Naive thymus-derived CD4-positive, alpha-beta T cell (primary cell): ENCODE measurements at regions of chr2 and their contacts with region 1.

Region 1: GRCh38 chr2:50143822-50144575 is 887.9 kb downstream of the NRXN1 start:
- DNase-seq: peak in 5 of 9 donors; percentile 2 to 15 (median 10)
- ATAC-seq: peak; percentile 53
- H3K4me3 ChIP-seq: no peak overlapping the region
- H3K4me3 Mint-ChIP-seq: peak overlapping the region; percentile 24 to 86 (median 76)
- H3K27ac ChIP-seq: no peak overlapping the region
- H3K27ac Mint-ChIP-seq: peak overlapping the region in 3 of 9 donors; percentile 10 to 66 (median 33)
- H3K4me1 ChIP-seq: no peaks in the 10 kb centered on the region
- H3K4me1 Mint-ChIP-seq: peaks cover 0 to 11% (median 5%) of the 10 kb centered on the region in 7 donors
- H3K27me3 ChIP-seq: no peaks in the 10 kb centered on the region
- H3K27me3 Mint-ChIP-seq: no peaks in the 10 kb centered on the region

Region 2: GRCh38 chr2:49616800-49617199 is 527.2 kb before region 1 on chr2:
- CTCF ChIA-PET with region 1: no interaction called
- POLR2A ChIA-PET with region 1: no interaction called
- intact Hi-C with region 1: loop called in 1 of 2 experiments (anchors 5 kb)
- DNase-seq: no peak
- ATAC-seq: no peak
- H3K4me3 ChIP-seq: no peak overlapping the region
- H3K4me3 Mint-ChIP-seq: no peak overlapping the region
- H3K27ac ChIP-seq: no peak overlapping the region
- H3K27ac Mint-ChIP-seq: no peak overlapping the region
- H3K4me1 ChIP-seq: no peaks in the 10 kb centered on the region
- H3K4me1 Mint-ChIP-seq: no peaks in the 10 kb centered on the region
- H3K27me3 ChIP-seq: no peaks in the 10 kb centered on the region
- H3K27me3 Mint-ChIP-seq: no peaks in the 10 kb centered on the region

Region 3: GRCh38 chr2:49687918-49688317 is 456.1 kb before region 1 on chr2:
- CTCF ChIA-PET with region 1: no interaction called
- POLR2A ChIA-PET with region 1: no interaction called
- intact Hi-C with region 1: loop called in 1 of 2 experiments (anchors 2 kb)
- DNase-seq: no peak
- ATAC-seq: no peak
- H3K4me3 ChIP-seq: no peak overlapping the region
- H3K4me3 Mint-ChIP-seq: no peak overlapping the region
- H3K27ac ChIP-seq: no peak overlapping the region
- H3K27ac Mint-ChIP-seq: no peak overlapping the region
- H3K4me1 ChIP-seq: no peaks in the 10 kb centered on the region
- H3K4me1 Mint-ChIP-seq: no peaks in the 10 kb centered on the region
- H3K27me3 ChIP-seq: no peaks in the 10 kb centered on the region
- H3K27me3 Mint-ChIP-seq: peaks cover 0 to 3% (median 0%) of the 10 kb centered on the region in 5 donors

Region 4: DNA sequence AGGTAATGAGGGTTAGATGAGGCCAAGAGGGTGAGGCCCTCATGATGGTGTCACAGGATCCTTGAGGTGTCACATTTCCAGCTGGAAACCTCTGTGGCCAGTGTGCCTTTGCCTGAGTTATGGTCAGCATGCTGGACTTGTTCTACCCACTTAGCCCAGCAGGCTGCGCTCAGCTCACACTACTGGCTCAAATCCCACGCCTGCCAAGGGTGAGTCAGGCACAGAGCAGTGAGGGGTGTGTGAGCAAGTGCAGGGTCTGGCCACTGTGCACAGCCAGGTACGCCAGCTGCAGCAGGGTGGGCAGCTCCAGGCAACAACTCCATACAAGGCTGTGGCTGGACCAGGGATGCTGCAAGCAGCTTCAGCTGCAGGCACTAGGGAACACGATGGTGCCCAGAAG is 373.1 kb before region 1 on chr2:
- CTCF ChIA-PET with region 1: no interaction called
- POLR2A ChIA-PET with region 1: no interaction called
- intact Hi-C with region 1: loop called in 1 of 2 experiments (anchors 5 kb)
- DNase-seq: no peak
- ATAC-seq: peak; percentile 31
- H3K4me3 ChIP-seq: no peak overlapping the region
- H3K4me3 Mint-ChIP-seq: no peak overlapping the region
- H3K27ac ChIP-seq: no peak overlapping the region
- H3K27ac Mint-ChIP-seq: no peak overlapping the region
- H3K4me1 ChIP-seq: no peaks in the 10 kb centered on the region
- H3K4me1 Mint-ChIP-seq: no peaks in the 10 kb centered on the region
- H3K27me3 ChIP-seq: no peaks in the 10 kb centered on the region
- H3K27me3 Mint-ChIP-seq: no peaks in the 10 kb centered on the region

Region 5: GRCh38 chr2:50358586-50358985 is 214.6 kb after region 1 on chr2:
- CTCF ChIA-PET with region 1: no interaction called
- POLR2A ChIA-PET with region 1: no interaction called
- intact Hi-C with region 1: no loop called
- DNase-seq: no peak
- ATAC-seq: no peak
- H3K4me3 ChIP-seq: no peak overlapping the region
- H3K4me3 Mint-ChIP-seq: no peak overlapping the region
- H3K27ac ChIP-seq: no peak overlapping the region
- H3K27ac Mint-ChIP-seq: no peak overlapping the region
- H3K4me1 ChIP-seq: no peaks in the 10 kb centered on the region
- H3K4me1 Mint-ChIP-seq: no peaks in the 10 kb centered on the region
- H3K27me3 ChIP-seq: no peaks in the 10 kb centered on the region
- H3K27me3 Mint-ChIP-seq: peaks cover 0 to 4% (median 0%) of the 10 kb centered on the region in 5 donors